Heart right ventricle (tissue), 16 donors: ENCODE measurements at regions of chr2 and their contacts with region 1.

Region 1: GRCh38 chr2:223101340-223102039 is 49.5 kb downstream of the KCNE4 start:
- DNase-seq: no peak
- ATAC-seq: peak in 4 of 8 donors; percentile 22 to 56 (median 42)
- H3K4me3 ChIP-seq: no peak overlapping the region
- H3K27ac ChIP-seq: peak overlapping the region in 2 of 10 donors; percentile 14 to 54
- H3K4me1 ChIP-seq: peaks cover 0 to 32% (median 16%) of the 10 kb centered on the region in 9 donors
- H3K27me3 ChIP-seq: no peaks in the 10 kb centered on the region
- CTCF ChIP-seq: peak in 7 of 9 donors; percentile 35 to 49 (median 43)

Region 2: GRCh38 chr2:222976521-222977076 is 124.9 kb before region 1 on chr2:
- intact Hi-C with region 1: loop called in 8 of 10 experiments (anchors 5 to 10 kb)
- DNase-seq: no peak
- ATAC-seq: no peak
- H3K4me3 ChIP-seq: no peak overlapping the region
- H3K27ac ChIP-seq: no peak overlapping the region
- H3K4me1 ChIP-seq: peaks cover 0 to 5% (median 0%) of the 10 kb centered on the region in 9 donors
- H3K27me3 ChIP-seq: peaks cover 0 to 5% (median 0%) of the 10 kb centered on the region in 7 donors
- CTCF ChIP-seq: no peak

Region 3: GRCh38 chr2:222982010-222982908 is 119.2 kb before region 1 on chr2:
- intact Hi-C with region 1: loop called in 5 of 10 experiments (anchors 5 to 10 kb)
- DNase-seq: peak in 1 of 2 donors; percentile 47
- ATAC-seq: peak in 7 of 8 donors; percentile 87 to 98 (median 90)
- H3K4me3 ChIP-seq: no peak overlapping the region
- H3K27ac ChIP-seq: no peak overlapping the region
- H3K4me1 ChIP-seq: peaks cover 0 to 9% (median 0%) of the 10 kb centered on the region in 9 donors
- H3K27me3 ChIP-seq: no peaks in the 10 kb centered on the region
- CTCF ChIP-seq: peak; percentile 7 to 73 (median 49)

Region 4: DNA sequence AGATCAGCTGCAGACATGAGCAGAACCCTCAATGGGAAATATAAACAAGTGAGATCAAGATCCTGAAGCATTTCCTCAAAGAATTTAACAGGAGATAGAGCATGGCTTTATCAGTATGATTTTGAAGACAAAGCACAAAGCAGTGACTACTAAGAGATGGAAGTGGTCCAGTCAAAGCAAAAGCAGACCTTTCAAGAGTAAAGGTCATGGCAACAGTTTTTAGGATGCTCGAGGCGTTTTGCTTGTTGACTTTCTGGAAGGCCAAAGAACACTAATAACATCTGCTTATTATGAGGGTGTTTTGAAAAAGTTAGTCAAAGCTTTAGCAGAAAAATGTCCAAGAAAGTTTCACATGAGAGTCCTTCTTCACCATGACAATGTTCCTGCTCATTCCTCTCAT is 79.0 kb after region 1 on chr2:
- intact Hi-C with region 1: no loop called
- DNase-seq: no peak
- ATAC-seq: no peak
- H3K4me3 ChIP-seq: no peak overlapping the region
- H3K27ac ChIP-seq: no peak overlapping the region
- H3K4me1 ChIP-seq: no peaks in the 10 kb centered on the region
- H3K27me3 ChIP-seq: no peaks in the 10 kb centered on the region
- CTCF ChIP-seq: no peak